ENCODE measurements at regions of chr2 and their contacts with region 1.

Region 1: DNA sequence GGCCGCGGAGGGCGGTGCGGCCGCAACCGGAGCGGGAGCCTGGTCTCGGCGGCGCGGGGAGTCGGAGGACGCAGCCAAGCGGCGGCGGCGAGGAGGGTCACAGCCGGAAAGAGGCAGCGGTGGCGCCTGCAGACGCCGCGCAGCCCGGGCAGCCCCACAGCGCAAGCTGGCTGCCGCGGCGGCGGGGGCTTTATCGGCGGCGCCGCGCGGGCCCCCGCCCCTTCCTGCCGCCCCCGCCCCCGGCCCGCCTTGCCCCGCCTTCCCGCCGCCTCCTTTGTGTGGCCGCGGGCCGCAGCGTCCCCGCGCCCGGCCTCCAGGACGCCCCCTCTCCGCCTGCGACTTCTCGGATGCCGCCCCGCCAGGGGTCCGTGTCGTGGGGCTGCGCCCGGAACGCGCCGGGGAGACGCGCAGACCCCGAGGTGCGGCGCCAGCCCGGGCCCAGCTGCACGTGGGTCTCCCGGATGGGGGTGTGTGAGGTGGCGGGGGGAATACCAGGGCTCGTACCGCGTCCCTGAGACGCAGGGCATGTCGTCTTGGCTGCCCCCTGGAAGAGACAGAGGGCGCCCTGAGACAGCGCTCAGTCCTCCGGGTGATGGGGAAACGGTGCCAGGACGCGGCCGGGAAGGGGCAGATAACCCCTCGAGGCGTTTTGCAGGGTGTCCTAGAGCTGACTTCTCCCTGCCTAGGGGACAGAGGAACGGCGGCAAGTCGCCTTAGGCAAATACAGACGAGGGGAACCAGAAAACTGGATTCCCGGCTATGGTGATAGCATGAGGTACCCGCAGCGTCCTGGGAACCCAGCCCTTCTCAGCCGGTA is at the start of gene SERPINE2:
- DNase-seq: peak; percentile 75
- ATAC-seq: peak; percentile 62
- total RNA-seq, gene SERPINE2: 6.1 TPM

Region 2: GRCh38 chr2:223993621-223994232 is 45.6 kb before region 1 on chr2:
- intact Hi-C with region 1: loop called (anchors 5 kb)
- DNase-seq: no peak
- ATAC-seq: peak; percentile 63